Calu3 (cell line): ENCODE measurements at regions of chr2 and their contacts with region 1.

Region 1: GRCh38 chr2:239600001-239600593 is 199.3 kb upstream of the HDAC4 start:
- DNase-seq: no peak
- H3K4me3 Mint-ChIP-seq: no peak overlapping the region
- H3K27ac Mint-ChIP-seq: no peak overlapping the region
- H3K4me1 Mint-ChIP-seq: no peaks in the 10 kb centered on the region
- H3K27me3 Mint-ChIP-seq: peaks cover 69% of the 10 kb centered on the region
- CTCF ChIP-seq: no peak

Region 2: DNA sequence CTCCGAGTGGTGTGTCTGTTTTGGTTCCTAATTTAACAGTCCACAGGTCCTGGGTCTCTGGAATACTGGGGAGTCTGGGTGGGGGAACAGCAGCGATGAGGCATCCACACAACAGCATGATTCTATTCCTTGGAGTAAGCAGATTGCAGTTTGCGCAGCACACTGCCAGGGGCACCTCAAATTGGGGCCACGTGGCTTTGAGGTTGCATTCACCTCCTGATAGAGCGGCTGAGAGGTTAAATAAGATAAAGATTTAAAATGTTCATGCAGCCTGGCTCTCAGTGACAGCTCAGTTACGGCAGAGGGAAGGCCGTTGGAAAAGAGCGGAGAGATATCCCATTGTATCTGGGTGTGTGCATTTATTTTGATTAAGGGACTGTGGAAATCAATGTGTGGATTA is 971.0 kb before region 1 on chr2:
- CTCF ChIA-PET with region 1: no interaction called
- intact Hi-C with region 1: no loop called
- DNase-seq: no peak
- H3K4me3 Mint-ChIP-seq: no peak overlapping the region
- H3K27ac Mint-ChIP-seq: no peak overlapping the region
- H3K4me1 Mint-ChIP-seq: no peaks in the 10 kb centered on the region
- H3K27me3 Mint-ChIP-seq: peaks cover 21% of the 10 kb centered on the region
- CTCF ChIP-seq: no peak

Region 3: DNA sequence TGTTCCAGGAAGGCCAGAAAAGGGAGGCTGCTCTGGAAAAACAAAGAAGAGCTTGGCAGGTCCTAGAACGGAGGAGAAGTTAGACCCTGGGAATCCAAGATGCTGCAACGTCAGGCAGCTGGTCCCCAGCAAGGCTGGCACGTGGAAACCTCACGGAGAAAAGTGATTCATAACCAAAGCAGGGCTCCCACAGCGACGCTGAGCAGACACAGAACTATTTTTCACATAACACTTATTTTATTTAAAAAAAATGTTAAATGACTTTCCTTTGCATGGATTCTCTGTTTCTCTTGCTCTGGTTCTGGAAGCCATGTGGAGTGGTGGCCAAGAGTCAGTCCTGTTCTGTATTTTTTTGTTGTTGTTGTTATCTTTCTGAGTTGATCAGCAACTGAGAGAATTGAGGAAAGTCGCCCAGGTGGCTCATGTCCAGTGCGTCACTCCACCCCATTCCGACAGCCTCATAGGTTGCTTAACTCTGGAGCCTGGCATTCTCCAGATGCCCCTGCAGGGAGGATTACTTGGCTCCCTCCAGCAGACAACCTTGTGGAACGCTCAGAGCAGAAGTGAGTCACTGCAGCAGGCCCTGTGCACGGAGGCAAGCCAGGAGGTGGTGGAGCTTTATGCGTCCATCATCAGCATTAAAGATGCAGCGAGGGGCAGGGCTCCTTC is 30.7 kb after region 1 on chr2:
- CTCF ChIA-PET with region 1: interaction called, 11 read pairs
- intact Hi-C with region 1: no loop called
- DNase-seq: no peak
- H3K4me3 Mint-ChIP-seq: no peak overlapping the region
- H3K27ac Mint-ChIP-seq: no peak overlapping the region
- H3K4me1 Mint-ChIP-seq: no peaks in the 10 kb centered on the region
- H3K27me3 Mint-ChIP-seq: peaks cover 50% of the 10 kb centered on the region
- CTCF ChIP-seq: no peak